Endothelial cell of umbilical vein (primary cell): ENCODE measurements at regions of chr3 and their contacts with region 1.

Region 1: GRCh38 chr3:134600685-134601463 is 49.9 kb downstream of the KY start:
- DNase-seq: peak; percentile 56
- H3K4me3 ChIP-seq: no peak overlapping the region
- H3K27ac ChIP-seq: no peak overlapping the region
- H3K4me1 ChIP-seq: no peaks in the 10 kb centered on the region
- H3K27me3 ChIP-seq: peaks cover 2 to 4% of the 10 kb centered on the region in 2 experiments
- CTCF ChIP-seq: peak; percentile 96
- POLR2A ChIP-seq: no peak

Region 2: GRCh38 chr3:134449277-134449676 is 151.6 kb before region 1 on chr3:
- CTCF ChIA-PET with region 1: no interaction called
- POLR2A ChIA-PET with region 1: no interaction called
- dilution Hi-C with region 1: no loop called
- intact Hi-C with region 1: no loop called
- DNase-seq: peak; percentile 11
- H3K4me3 ChIP-seq: no peak overlapping the region
- H3K27ac ChIP-seq: no peak overlapping the region
- H3K4me1 ChIP-seq: peaks cover 23% of the 10 kb centered on the region
- H3K27me3 ChIP-seq: peaks cover 0 to 6% of the 10 kb centered on the region in 2 experiments
- CTCF ChIP-seq: peak; percentile 32 to 45
- POLR2A ChIP-seq: no peak

Region 3: DNA sequence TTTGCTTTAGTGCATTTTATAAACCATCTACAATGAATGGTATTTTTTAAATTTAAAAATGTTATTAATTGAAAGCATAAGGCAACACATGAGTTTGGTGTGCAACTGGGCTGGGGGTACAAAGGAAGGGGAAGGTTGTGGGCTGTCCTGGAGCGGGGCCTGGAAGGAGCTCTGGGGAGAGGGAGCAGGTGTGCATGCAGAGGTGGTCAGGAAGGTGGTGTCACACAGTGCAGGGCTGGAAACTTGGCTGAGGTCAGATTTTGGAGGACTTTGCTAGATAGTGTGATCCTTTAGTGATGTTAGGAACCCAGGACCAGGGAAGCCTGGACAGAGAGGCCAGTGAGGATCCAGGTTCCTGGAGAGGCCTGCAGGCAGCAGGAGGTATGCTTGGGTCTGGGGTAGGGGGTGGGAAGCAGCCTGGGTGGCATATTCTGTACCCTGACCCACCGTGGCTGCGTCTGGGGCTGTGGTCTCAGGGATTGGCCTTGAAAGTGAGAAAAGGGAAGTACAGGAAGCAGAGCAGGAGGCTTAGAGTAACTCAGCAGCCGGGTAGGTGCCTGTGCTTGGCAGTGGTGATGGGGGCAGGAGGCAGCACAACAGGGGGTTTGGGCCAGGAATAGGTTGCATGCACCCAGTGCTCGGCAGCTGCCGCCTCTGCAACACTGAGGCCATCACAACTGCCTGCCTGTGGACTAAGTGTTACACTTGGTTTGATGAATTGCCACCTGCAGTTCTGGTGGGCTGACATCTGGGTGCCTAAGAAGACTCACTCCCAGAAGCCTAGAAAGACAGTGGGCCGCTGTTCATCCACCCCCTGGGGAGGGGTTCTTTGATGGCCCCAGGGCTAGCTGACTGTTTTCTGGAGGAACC is 17.0 kb after region 1 on chr3:
- CTCF ChIA-PET with region 1: interaction called, 42 read pairs
- POLR2A ChIA-PET with region 1: no interaction called
- dilution Hi-C with region 1: no loop called
- intact Hi-C with region 1: no loop called
- DNase-seq: no peak
- H3K4me3 ChIP-seq: no peak overlapping the region
- H3K27ac ChIP-seq: no peak overlapping the region
- H3K4me1 ChIP-seq: no peaks in the 10 kb centered on the region
- H3K27me3 ChIP-seq: no peaks in the 10 kb centered on the region
- CTCF ChIP-seq: no peak
- POLR2A ChIP-seq: no peak

Region 4: GRCh38 chr3:134640872-134641470 is 40.1 kb after region 1 on chr3:
- CTCF ChIA-PET with region 1: interaction called, 37 read pairs
- POLR2A ChIA-PET with region 1: no interaction called
- dilution Hi-C with region 1: no loop called
- intact Hi-C with region 1: loop called (anchors 1 kb)
- DNase-seq: peak; percentile 32
- H3K4me3 ChIP-seq: no peak overlapping the region
- H3K27ac ChIP-seq: no peak overlapping the region
- H3K4me1 ChIP-seq: no peaks in the 10 kb centered on the region
- H3K27me3 ChIP-seq: no peaks in the 10 kb centered on the region
- CTCF ChIP-seq: peak; percentile 26 to 64
- POLR2A ChIP-seq: no peak

Region 5: DNA sequence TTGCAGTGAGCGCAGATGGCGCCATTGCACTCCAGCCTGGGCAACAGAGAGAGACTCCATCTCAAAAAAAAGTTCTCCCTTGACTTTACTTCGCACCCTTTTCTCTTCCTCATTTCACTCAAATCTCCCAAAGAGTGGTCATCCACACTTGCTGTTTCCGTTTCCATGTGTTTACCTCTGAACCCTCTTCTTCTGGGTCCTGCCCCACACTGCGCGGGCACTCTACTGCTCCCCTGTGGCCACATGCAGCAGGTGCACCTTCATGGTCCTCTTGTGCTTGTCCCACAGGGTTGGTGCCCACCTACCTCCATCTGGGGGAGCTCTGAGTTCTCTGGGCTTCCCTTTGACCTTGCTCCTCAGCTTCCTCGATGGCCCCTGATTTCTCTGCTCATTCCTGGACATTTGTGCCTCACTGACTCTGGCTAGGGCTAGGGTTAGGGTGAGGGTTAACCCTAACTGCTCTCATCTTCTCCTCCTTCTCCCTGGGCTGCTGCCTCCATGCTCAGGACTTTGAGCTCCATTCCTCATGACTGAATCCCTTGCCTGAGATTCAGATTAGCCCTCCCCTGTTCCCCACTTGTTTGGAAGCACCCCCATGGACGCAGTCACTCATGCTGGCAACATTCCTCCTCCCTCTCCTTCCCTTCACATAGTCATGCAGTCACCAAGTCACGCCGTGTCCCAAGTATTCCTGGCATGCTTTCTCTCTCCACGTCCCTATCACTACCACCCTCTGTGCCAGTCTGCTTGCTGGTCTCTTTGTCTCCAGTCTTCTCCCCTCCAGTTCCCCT is 76.5 kb after region 1 on chr3:
- CTCF ChIA-PET with region 1: interaction called, 5 read pairs
- POLR2A ChIA-PET with region 1: no interaction called
- dilution Hi-C with region 1: no loop called
- intact Hi-C with region 1: loop called (anchors 1 kb)
- DNase-seq: peak; percentile 5
- H3K4me3 ChIP-seq: no peak overlapping the region
- H3K27ac ChIP-seq: no peak overlapping the region
- H3K4me1 ChIP-seq: no peaks in the 10 kb centered on the region
- H3K27me3 ChIP-seq: peaks cover 0 to 2% of the 10 kb centered on the region in 2 experiments
- CTCF ChIP-seq: peak; percentile 26 to 59
- POLR2A ChIP-seq: no peak

Region 6: DNA sequence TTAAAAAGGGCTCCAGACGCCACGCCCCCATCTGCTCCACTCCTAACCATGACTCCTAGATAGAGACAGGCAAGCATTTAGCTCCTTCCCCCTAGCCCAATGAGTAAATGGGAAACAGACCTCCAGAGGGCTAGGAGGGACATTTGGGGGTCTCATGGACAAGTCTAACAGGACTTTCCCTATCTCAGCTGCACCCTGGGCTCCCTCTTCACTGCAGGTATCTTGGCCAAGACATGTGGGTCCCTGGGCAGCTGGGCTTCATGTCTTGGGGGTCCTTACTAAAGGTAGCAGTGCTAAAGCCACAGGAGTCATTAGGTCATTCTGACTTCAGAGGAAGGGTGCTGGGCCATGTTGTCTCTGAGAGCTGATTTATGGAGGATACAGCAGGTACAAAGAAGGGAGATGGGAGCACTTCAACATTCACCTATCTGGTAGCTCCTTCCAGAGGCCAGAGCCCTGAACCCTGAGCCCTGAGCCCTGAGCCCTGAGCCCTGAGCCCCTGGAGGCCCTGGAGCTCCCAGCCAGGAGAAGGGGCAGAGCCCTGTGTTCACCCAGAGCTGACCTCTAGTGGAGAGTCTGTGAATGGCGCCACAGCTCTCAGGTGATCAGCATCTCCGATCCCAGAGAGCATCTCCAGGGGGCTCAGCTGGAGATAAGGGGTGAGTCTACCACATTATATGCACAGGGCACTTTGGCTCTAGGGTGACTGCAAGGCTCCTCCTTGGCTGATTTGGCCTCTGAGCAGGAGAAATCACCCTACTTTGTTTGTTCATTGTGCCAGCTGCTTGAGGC is 154.1 kb after region 1 on chr3:
- CTCF ChIA-PET with region 1: interaction called, 102 read pairs
- POLR2A ChIA-PET with region 1: no interaction called
- dilution Hi-C with region 1: no loop called
- intact Hi-C with region 1: loop called (anchors 1 kb)
- DNase-seq: peak; percentile 24
- H3K4me3 ChIP-seq: no peak overlapping the region
- H3K27ac ChIP-seq: no peak overlapping the region
- H3K4me1 ChIP-seq: no peaks in the 10 kb centered on the region
- H3K27me3 ChIP-seq: no peaks in the 10 kb centered on the region
- CTCF ChIP-seq: peak; percentile 54 to 83
- POLR2A ChIP-seq: no peak

Region 7: DNA sequence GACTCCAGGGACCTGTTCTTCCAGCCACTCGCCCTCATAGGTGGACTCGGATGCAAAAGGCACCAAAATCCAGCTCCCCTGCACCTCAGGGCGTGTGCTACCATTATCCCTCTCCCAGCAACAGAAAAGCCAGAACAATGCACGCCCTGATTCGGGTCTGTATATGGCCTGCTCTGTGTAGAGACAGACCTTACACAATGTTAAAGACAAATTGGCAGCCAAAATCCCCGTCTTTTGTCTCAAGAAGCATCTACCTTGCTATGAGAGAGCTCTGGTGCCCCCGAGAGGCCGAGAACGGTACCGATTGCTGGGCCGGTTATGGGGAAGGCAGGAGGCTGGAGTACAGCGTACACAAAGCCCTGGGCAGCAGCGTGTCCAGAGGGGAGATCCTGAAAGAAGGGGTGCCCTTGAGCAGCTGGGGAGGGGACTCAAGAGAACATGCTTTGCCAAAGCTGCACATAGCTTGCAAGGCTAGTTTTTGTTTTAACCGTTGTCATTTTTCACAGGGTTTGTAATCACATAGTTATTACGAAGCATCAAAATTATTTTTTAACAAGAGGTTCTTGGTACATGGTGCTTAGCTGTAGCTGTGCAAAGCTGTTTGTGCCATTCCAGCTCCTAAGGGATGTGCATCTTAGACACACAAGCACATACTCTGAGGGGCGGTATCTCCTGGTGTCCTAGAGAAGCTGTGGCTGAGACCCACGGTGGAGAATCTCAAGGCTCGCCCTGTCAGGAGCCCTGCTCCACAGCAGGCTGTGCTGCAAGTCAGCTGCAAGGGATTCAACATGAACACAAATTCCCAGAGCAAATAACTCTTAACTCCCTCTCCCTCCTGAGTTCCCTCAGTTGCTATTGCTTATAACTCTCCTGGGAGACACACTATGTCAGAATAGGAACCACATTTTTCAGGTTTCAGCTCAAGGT is 903.1 kb after region 1 on chr3:
- CTCF ChIA-PET with region 1: interaction called, 4 read pairs
- POLR2A ChIA-PET with region 1: no interaction called
- dilution Hi-C with region 1: no loop called
- intact Hi-C with region 1: loop called (anchors 1 kb)
- DNase-seq: peak; percentile 38
- H3K4me3 ChIP-seq: no peak overlapping the region
- H3K27ac ChIP-seq: no peak overlapping the region
- H3K4me1 ChIP-seq: no peaks in the 10 kb centered on the region
- H3K27me3 ChIP-seq: no peaks in the 10 kb centered on the region
- CTCF ChIP-seq: peak; percentile 49 to 54
- POLR2A ChIP-seq: no peak

Region 8: DNA sequence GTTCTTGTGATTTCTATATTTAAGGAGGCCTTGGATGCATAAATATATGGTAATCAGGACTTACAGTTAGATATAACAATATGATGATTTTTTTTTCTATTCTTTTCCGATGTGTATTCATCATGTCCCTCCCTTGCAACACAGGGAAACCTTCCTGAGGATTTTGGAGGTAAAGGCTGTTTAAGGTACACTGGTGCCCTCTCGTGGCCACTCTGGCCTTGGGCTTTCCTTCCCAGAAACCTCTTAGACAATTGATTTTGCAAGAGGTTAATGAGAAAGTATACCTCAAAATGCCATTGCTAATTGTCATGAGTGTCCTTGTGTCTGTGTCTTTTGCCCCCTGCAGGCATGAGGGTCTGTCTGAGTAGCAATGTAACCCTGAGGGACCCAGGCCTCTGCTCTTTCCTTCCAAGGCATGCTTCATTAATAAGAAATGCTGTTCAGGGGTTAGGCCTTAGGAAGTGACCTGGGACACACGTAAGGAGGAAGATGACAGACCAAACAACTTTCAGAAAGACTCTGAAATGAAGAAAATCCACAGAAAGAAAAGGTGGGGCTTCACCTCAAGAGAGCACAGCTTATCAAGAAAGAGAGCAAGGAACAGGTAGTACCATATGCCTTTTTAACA is 1294.3 kb after region 1 on chr3:
- CTCF ChIA-PET with region 1: interaction called, 7 read pairs
- POLR2A ChIA-PET with region 1: no interaction called
- dilution Hi-C with region 1: no loop called
- intact Hi-C with region 1: loop called (anchors 1 kb)
- DNase-seq: peak; percentile 78
- H3K4me3 ChIP-seq: no peak overlapping the region
- H3K27ac ChIP-seq: no peak overlapping the region
- H3K4me1 ChIP-seq: no peaks in the 10 kb centered on the region
- H3K27me3 ChIP-seq: peaks cover 0 to 2% of the 10 kb centered on the region in 2 experiments
- CTCF ChIP-seq: peak; percentile 77 to 88
- POLR2A ChIP-seq: no peak